ENCODE measurements at regions of chr2 and their contacts with region 1.

Region 1: GRCh38 chr2:98444436-98445176 is at the start of gene INPP4A:
- DNase-seq: peak; percentile 67 to 86 (median 78)
- ATAC-seq: peak; percentile 82
- H3K4me3 ChIP-seq: peak within 1 kb of the TSS; percentile 93
- H3K4me3 Mint-ChIP-seq: peak within 1 kb of the TSS; percentile 91 to 99 (median 97)
- H3K27ac ChIP-seq: peak within 1 kb of the TSS; percentile 83
- H3K27ac Mint-ChIP-seq: peak within 1 kb of the TSS; percentile 91 to 99 (median 97)
- H3K4me1 ChIP-seq: peaks cover 21 to 37% of the 10 kb centered on the region in 2 donors
- H3K4me1 Mint-ChIP-seq: peaks cover 19 to 54% (median 39%) of the 10 kb centered on the region in 7 donors
- H3K27me3 ChIP-seq: no peaks in the 10 kb centered on the region
- H3K27me3 Mint-ChIP-seq: no peaks in the 10 kb centered on the region
- total RNA-seq, gene INPP4A: 126 to 165 (median 157) TPM

Region 2: GRCh38 chr2:98455494-98455976 is 10.9 kb after region 1 on chr2:
- CTCF ChIA-PET with region 1: interaction called, 12 read pairs
- POLR2A ChIA-PET with region 1: interaction called, 140 read pairs
- intact Hi-C with region 1: loop called (anchors 1 kb)
- DNase-seq: peak in 5 of 9 donors; percentile 52 to 71 (median 54)
- ATAC-seq: peak; percentile 72
- H3K4me3 ChIP-seq: peak overlapping the region; percentile 10
- H3K4me3 Mint-ChIP-seq: peak overlapping the region; percentile 56 to 96 (median 78)
- H3K27ac ChIP-seq: peak overlapping the region; percentile 68
- H3K27ac Mint-ChIP-seq: peak overlapping the region; percentile 88 to 98 (median 93)
- H3K4me1 ChIP-seq: peaks cover 90 to 96% of the 10 kb centered on the region in 2 donors
- H3K4me1 Mint-ChIP-seq: peaks cover 82 to 100% (median 96%) of the 10 kb centered on the region in 7 donors
- H3K27me3 ChIP-seq: no peaks in the 10 kb centered on the region
- H3K27me3 Mint-ChIP-seq: no peaks in the 10 kb centered on the region

Region 3: DNA sequence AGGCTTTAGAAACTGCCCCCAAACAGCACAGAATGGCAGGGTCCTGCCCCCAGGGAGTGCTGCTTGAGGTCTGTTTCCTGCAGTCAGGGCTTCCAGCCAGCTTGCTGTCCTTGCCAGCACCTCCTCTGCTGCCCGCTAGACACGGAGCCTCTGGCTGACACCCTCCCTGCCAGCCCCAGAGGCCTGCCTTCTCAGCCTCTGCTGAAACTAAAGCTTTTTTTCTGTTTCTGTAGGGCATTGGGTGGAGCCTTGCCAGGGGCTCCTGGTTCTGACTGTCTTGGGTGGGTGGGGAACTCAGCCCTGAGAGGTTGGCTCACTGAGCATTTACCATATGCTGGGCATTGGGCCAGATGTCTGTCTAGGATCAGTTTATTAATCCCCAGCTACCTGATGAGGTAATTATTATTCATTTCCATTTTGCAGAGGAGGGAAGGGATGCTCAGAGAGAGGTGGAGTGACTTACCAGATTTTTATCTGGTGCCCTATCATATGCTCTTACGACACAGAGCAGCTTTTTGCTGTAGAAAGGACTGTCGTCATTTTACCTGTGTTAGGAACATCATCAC is 35.4 kb after region 1 on chr2:
- CTCF ChIA-PET with region 1: interaction called, 4 read pairs
- POLR2A ChIA-PET with region 1: interaction called, 10 read pairs
- intact Hi-C with region 1: loop called (anchors 1 to 2 kb)
- DNase-seq: peak in 1 of 9 donors; percentile 70
- ATAC-seq: peak; percentile 58
- H3K4me3 ChIP-seq: peak overlapping the region; percentile 8
- H3K4me3 Mint-ChIP-seq: peak overlapping the region; percentile 41 to 82 (median 72)
- H3K27ac ChIP-seq: peak overlapping the region; percentile 64
- H3K27ac Mint-ChIP-seq: peak overlapping the region; percentile 81 to 95 (median 91)
- H3K4me1 ChIP-seq: peaks cover 87 to 97% of the 10 kb centered on the region in 2 donors
- H3K4me1 Mint-ChIP-seq: peaks cover 80 to 100% (median 98%) of the 10 kb centered on the region in 7 donors
- H3K27me3 ChIP-seq: no peaks in the 10 kb centered on the region
- H3K27me3 Mint-ChIP-seq: no peaks in the 10 kb centered on the region

Region 4: GRCh38 chr2:98508709-98509066 is 64.1 kb after region 1 on chr2:
- CTCF ChIA-PET with region 1: no interaction called
- POLR2A ChIA-PET with region 1: interaction called, 4 read pairs
- intact Hi-C with region 1: loop called in 1 of 2 experiments (anchors 2 kb)
- DNase-seq: peak in 8 of 9 donors; percentile 52 to 75 (median 63)
- ATAC-seq: peak; percentile 81
- H3K4me3 ChIP-seq: no peak overlapping the region
- H3K4me3 Mint-ChIP-seq: peak overlapping the region; percentile 22 to 72 (median 54)
- H3K27ac ChIP-seq: peak overlapping the region; percentile 50
- H3K27ac Mint-ChIP-seq: peak overlapping the region; percentile 72 to 92 (median 86)
- H3K4me1 ChIP-seq: peaks cover 49 to 85% of the 10 kb centered on the region in 2 donors
- H3K4me1 Mint-ChIP-seq: peaks cover 82 to 100% (median 98%) of the 10 kb centered on the region in 7 donors
- H3K27me3 ChIP-seq: no peaks in the 10 kb centered on the region
- H3K27me3 Mint-ChIP-seq: no peaks in the 10 kb centered on the region

Region 5: DNA sequence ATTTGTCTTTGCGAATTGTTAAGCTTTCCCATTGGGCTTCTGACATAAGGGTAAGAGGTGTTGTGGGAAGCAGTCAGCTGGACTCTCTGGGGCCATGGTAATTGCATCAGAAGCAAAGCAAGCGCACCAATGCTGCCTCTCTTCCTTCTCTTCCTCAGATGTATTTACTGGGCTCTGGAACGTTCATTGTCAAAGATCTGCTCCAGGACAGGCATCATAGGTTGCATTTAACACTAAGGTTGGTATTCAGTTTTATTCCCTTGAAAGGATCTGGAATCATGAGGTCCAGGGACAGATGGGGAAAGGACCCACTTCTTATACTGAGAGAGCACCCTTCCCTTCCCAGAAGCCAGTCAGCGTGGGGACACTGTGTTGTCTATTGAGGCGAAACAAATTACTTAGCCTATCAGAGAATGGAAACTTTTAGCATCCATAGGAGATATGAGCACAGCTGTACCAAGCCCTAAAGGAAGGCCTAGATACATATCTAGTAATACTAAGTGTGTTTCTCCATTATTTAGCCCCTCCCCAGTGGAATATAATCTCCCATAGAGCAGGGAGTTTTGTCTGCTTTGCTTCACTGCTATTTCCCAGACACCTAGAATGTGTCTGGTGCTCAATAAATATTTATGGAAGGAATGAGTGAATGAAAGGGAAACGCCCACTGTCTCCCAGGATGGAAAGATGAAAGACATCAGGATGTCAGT is 91.5 kb after region 1 on chr2:
- CTCF ChIA-PET with region 1: no interaction called
- POLR2A ChIA-PET with region 1: no interaction called
- intact Hi-C with region 1: no loop called
- DNase-seq: no peak
- ATAC-seq: no peak
- H3K4me3 ChIP-seq: no peak overlapping the region
- H3K4me3 Mint-ChIP-seq: no peak overlapping the region
- H3K27ac ChIP-seq: no peak overlapping the region
- H3K27ac Mint-ChIP-seq: peak overlapping the region in 7 of 9 donors; percentile 1 to 61 (median 30)
- H3K4me1 ChIP-seq: no peaks in the 10 kb centered on the region
- H3K4me1 Mint-ChIP-seq: peaks cover 0 to 10% (median 5%) of the 10 kb centered on the region in 7 donors
- H3K27me3 ChIP-seq: no peaks in the 10 kb centered on the region
- H3K27me3 Mint-ChIP-seq: no peaks in the 10 kb centered on the region

Region 6: GRCh38 chr2:98608116-98608999 is 163.8 kb after region 1 on chr2 and contains the starts of genes COA5 and UNC50:
- CTCF ChIA-PET with region 1: no interaction called
- POLR2A ChIA-PET with region 1: no interaction called
- intact Hi-C with region 1: loop called in 1 of 2 experiments (anchors 10 kb)
- DNase-seq: peak; percentile 82 to 94 (median 87)
- ATAC-seq: peak; percentile 93
- H3K4me3 ChIP-seq: peak within 1 kb of the TSS; percentile 94
- H3K4me3 Mint-ChIP-seq: peak within 1 kb of the TSS; percentile 82 to 97 (median 90)
- H3K27ac ChIP-seq: peak within 1 kb of the TSS; percentile 97
- H3K27ac Mint-ChIP-seq: peak within 1 kb of the TSS; percentile 81 to 97 (median 92)
- H3K4me1 ChIP-seq: peaks cover 39 to 48% of the 10 kb centered on the region in 2 donors
- H3K4me1 Mint-ChIP-seq: peaks cover 51 to 82% (median 70%) of the 10 kb centered on the region in 7 donors
- H3K27me3 ChIP-seq: no peaks in the 10 kb centered on the region
- H3K27me3 Mint-ChIP-seq: no peaks in the 10 kb centered on the region
- total RNA-seq, gene COA5: 23.8 to 55.2 (median 29.2) TPM
- total RNA-seq, gene UNC50: 22.2 to 41.3 (median 29.9) TPM

Region 7: DNA sequence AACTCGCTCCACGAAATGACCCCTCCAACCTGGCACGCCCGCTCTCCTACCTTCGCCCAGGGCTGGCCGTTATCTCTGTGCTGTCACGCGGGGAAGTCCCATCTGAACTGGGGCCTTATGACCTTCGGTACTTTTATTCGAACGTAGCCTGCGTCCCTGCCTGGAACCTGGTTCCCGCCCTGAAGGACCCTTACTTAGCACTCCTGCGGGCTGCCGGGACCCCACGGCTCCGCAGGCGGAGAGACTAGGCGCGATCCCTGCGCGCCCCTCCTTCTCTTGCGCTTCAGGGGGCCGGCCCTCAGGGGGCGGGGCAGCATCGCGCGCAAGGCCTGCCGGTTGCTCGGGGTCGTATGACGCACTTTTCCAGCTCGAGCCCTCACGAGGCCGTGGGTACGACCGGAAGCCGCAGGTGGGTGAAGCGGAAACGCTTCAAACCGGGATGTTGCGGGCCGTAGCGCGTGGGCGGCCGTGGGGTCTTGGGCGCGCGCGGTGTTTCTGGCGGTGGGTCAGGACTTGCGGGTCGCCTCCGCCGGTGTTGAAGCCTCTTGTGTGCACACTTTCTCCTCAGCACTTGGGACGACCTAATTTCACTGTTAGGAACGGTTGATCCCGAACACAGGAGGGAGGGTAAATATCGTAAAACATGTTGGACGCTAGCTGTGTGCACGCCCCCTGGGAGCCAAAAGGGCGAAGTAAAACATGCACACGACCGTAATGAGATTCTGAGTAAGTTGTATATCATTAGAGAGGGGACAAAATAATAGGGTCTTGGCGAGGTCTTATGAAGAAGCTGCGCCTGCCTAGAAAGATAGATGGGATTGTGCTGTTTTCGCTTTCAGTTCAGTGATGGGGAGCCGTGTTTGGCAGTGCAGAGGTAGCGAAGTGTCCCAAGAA is 710.3 kb after region 1 on chr2 and contains the starts of genes LIPT1 and TSGA10:
- CTCF ChIA-PET with region 1: no interaction called
- POLR2A ChIA-PET with region 1: no interaction called
- intact Hi-C with region 1: loop called in 1 of 2 experiments (anchors 10 kb)
- DNase-seq: peak; percentile 80 to 95 (median 92)
- ATAC-seq: peak; percentile 98
- H3K4me3 ChIP-seq: peak within 1 kb of the TSS; percentile 83
- H3K4me3 Mint-ChIP-seq: peak within 1 kb of the TSS in 1 of 10 donors; percentile 93
- H3K27ac ChIP-seq: peak within 1 kb of the TSS; percentile 92
- H3K27ac Mint-ChIP-seq: peak within 1 kb of the TSS in 2 of 9 donors; percentile 96 to 97
- H3K4me1 ChIP-seq: peaks cover 15 to 18% of the 10 kb centered on the region in 2 donors
- H3K4me1 Mint-ChIP-seq: peaks cover 25 to 57% (median 42%) of the 10 kb centered on the region in 7 donors
- H3K27me3 ChIP-seq: no peaks in the 10 kb centered on the region
- H3K27me3 Mint-ChIP-seq: no peaks in the 10 kb centered on the region
- total RNA-seq, gene LIPT1: 7.7 to 24.1 (median 15.9) TPM
- total RNA-seq, gene TSGA10: 3.5 to 31.7 (median 12.6) TPM